ENCODE measurements at regions of chr17 and their contacts with region 1.

Region 1: DNA sequence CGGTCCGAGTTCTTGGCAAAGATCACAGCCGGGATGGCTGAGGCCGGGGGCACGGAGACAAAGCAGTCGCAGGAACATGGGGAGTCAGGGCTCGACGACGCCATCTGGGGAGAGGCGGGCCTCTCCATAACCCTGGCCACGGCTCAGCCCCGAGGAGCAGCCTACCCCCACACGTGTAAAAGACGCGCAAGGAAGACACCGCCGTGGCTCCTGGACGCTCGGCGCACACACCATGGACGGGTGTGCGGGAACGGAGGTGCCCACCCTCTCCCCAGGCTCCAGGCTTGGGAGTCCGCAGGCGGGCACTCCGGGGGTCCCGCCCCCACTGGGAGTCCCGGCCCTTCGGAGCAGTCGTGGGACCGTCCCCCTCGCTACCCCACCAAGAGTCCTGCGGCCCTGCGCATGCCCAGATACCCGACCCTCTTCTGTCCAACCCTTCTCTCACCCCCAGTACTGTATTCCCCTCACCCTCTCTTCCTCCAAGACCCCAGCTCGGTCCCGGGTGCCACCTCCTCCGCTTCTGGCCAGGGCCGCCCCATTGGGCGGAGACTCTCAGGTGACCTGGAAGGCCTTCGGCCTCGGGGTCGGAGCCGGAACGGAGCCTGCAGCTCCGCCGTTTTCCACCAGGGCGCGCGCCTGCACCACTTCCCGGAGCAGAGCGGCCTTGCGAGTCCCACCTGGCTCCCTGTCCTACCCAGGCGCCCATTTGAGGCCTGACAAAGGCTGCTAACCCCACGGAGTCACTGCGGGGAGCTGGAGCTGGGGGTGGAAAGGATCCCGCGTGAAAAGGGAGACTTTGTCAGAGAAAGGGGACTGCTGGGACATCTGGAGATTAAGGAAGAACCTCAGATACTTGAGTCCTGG is at the start of gene SCRN2:
- DNase-seq: peak; percentile 81
- ATAC-seq: peak; percentile 88
- H3K4me3 ChIP-seq: peak within 1 kb of the TSS; percentile 94 to 98
- H3K27ac ChIP-seq: peak within 1 kb of the TSS; percentile 69
- H3K4me1 ChIP-seq: peaks cover 25 to 46% of the 10 kb centered on the region in 2 experiments
- H3K27me3 ChIP-seq: no peaks in the 10 kb centered on the region
- CTCF ChIP-seq: peak; percentile 98 to 100 (median 99)
- POLR2A ChIP-seq: no peak
- RAD21 ChIP-seq: peak; percentile 100
- total RNA-seq, gene SCRN2: 53.2 TPM

Region 2: GRCh38 chr17:47862621-47863440 is 21.9 kb after region 1 on chr17:
- CTCF ChIA-PET with region 1: interaction called, 15 read pairs
- POLR2A ChIA-PET with region 1: no interaction called
- RAD21 ChIA-PET with region 1: no interaction called
- intact Hi-C with region 1: no loop called
- DNase-seq: peak; percentile 66
- ATAC-seq: peak; percentile 80
- H3K4me3 ChIP-seq: peak overlapping the region in 1 of 2 experiments; percentile 23; a peak in 2 of 4 replicates
- H3K27ac ChIP-seq: peak overlapping the region; percentile 32; the same call in 1 of the 2 replicates
- H3K4me1 ChIP-seq: peaks cover 11 to 18% of the 10 kb centered on the region in 2 experiments
- H3K27me3 ChIP-seq: no peaks in the 10 kb centered on the region
- CTCF ChIP-seq: no peak
- POLR2A ChIP-seq: no peak
- RAD21 ChIP-seq: no peak

Region 3: DNA sequence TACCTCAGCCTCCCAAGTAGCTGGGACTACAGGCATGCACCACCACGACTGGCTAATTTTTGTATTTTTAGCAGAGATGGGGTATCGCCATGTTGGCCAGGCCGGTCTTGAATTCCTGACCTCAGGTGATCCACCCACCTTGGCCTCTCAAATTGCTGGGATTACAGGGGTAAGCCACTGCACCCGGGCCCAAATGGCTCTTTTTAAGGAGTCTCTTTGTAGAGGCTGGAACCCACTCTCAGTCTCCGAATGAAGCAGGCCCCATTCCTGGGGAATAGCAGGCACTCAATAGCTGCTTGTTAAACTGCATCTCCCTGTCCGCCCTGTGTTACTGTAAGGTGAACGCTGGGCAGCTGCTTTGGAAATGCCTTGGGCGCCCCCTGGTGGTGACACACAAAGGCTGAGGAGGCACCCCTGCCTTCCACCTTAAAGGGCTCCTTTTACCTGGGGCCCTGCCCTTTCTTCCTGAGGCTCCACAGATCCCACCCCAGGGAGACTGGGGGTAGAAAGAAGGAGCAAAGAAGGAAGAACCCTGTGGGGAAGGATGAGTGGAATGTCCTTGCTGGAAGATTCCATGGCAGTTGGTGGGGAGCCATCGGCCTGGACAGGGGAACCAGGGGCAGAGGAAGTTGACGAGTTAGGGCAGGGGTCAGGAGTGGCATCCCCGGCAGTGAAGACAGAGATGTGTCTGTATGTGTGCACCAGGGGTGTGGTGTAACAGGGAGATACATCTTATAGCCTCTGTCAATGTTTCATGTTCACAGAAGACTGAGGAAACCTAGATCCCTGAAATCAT is 49.0 kb after region 1 on chr17:
- CTCF ChIA-PET with region 1: interaction called, 393 read pairs
- POLR2A ChIA-PET with region 1: interaction called, 24 read pairs
- RAD21 ChIA-PET with region 1: interaction called, 36 to 43 read pairs
- intact Hi-C with region 1: loop called (anchors 1 kb)
- DNase-seq: peak; percentile 78
- ATAC-seq: peak; percentile 99
- H3K4me3 ChIP-seq: no peak overlapping the region
- H3K27ac ChIP-seq: no peak overlapping the region
- H3K4me1 ChIP-seq: peaks cover 0 to 32% of the 10 kb centered on the region in 2 experiments; a peak in 2 of 4 replicates
- H3K27me3 ChIP-seq: no peaks in the 10 kb centered on the region
- CTCF ChIP-seq: peak; percentile 97 to 100 (median 98)
- POLR2A ChIP-seq: no peak
- RAD21 ChIP-seq: peak; percentile 100

Region 4: GRCh38 chr17:47949136-47949759 is 108.3 kb after region 1 on chr17:
- CTCF ChIA-PET with region 1: interaction called, 16 read pairs
- POLR2A ChIA-PET with region 1: no interaction called
- RAD21 ChIA-PET with region 1: interaction called in 1 of 2 experiments, 3 read pairs
- intact Hi-C with region 1: loop called (anchors 1 kb)
- DNase-seq: peak; percentile 67
- ATAC-seq: peak; percentile 81
- H3K4me3 ChIP-seq: peak overlapping the region; percentile 29 to 40
- H3K27ac ChIP-seq: peak overlapping the region; percentile 67
- H3K4me1 ChIP-seq: peaks cover 30 to 51% of the 10 kb centered on the region in 2 experiments
- H3K27me3 ChIP-seq: no peaks in the 10 kb centered on the region
- CTCF ChIP-seq: peak; percentile 96 to 99 (median 98)
- POLR2A ChIP-seq: no peak
- RAD21 ChIP-seq: peak; percentile 97

Region 5: GRCh38 chr17:48011405-48012150 is 170.6 kb after region 1 on chr17:
- CTCF ChIA-PET with region 1: interaction called, 86 read pairs
- POLR2A ChIA-PET with region 1: interaction called, 3 read pairs
- RAD21 ChIA-PET with region 1: no interaction called
- intact Hi-C with region 1: no loop called
- DNase-seq: peak; percentile 35
- ATAC-seq: peak; percentile 89
- H3K4me3 ChIP-seq: peak overlapping the region in 1 of 2 experiments; percentile 44; a peak in 2 of 4 replicates
- H3K27ac ChIP-seq: no peak overlapping the region
- H3K4me1 ChIP-seq: peaks cover 5 to 17% of the 10 kb centered on the region in 2 experiments; a peak in 3 of 4 replicates
- H3K27me3 ChIP-seq: no peaks in the 10 kb centered on the region
- CTCF ChIP-seq: peak; percentile 53 to 89 (median 86); a peak in 5 of 6 replicates
- POLR2A ChIP-seq: no peak
- RAD21 ChIP-seq: peak; percentile 69

Region 6: GRCh38 chr17:48113201-48113676 is 272.3 kb after region 1 on chr17:
- CTCF ChIA-PET with region 1: no interaction called
- POLR2A ChIA-PET with region 1: no interaction called
- RAD21 ChIA-PET with region 1: no interaction called
- intact Hi-C with region 1: no loop called
- DNase-seq: no peak
- ATAC-seq: no peak
- H3K4me3 ChIP-seq: no peak overlapping the region
- H3K27ac ChIP-seq: no peak overlapping the region
- H3K4me1 ChIP-seq: peaks cover 0 to 9% of the 10 kb centered on the region in 2 experiments; a peak in 2 of 4 replicates
- H3K27me3 ChIP-seq: no peaks in the 10 kb centered on the region
- CTCF ChIP-seq: no peak
- POLR2A ChIP-seq: no peak
- RAD21 ChIP-seq: no peak